HCT116 (cell line): ENCODE measurements at regions of chr19 and their contacts with region 1.

Region 1: DNA sequence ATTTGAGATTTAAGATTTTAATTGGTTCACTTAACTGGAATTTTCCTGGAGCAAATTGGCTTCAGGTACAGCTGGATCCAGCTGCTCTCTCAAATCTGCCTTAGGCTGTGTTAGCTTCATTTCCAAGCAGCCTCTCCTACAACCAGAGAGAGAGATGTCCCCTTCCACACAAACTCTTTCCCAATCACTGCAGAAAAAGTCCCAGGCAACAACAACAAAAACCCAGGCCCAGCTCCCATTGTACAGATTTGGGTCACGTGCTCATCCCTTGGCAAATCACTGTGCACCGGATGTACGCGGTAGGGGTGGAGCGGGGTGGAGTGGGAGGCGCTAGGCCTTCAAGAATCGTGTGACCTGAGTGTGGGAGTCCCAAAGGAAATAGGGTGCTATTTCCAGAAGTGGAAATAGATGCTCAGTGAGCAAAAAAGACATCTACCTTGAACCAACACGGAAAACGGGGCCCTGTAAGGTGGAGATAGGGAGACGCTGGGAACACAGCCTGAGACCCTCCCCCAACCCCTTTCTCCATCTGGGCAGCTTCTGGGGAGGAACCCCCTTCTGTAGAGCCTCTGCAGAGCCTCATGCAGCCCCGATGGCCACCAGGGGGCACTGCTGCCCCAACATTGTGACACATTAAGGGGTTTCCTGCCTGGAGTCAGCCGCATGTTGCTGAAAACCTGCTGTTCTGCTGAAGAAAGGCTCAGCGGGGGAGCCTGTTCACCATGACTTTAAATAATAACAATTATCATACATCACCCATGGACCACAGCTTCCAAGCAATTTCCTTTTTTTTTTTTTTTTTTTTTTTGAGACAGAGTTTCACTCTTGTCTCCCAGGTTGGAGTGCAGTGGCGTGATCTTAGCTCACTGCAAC is 25.4 kb downstream of the HPN start:
- DNase-seq: peak; percentile 89
- ATAC-seq: peak; percentile 97
- H3K4me3 ChIP-seq: peak overlapping the region in 1 of 2 experiments; percentile 13; a peak in 2 of 4 replicates
- H3K27ac ChIP-seq: peak overlapping the region; percentile 30
- H3K4me1 ChIP-seq: peaks cover 10 to 28% of the 10 kb centered on the region in 2 experiments; a peak in 3 of 4 replicates
- H3K27me3 ChIP-seq: no peaks in the 10 kb centered on the region
- CTCF ChIP-seq: peak; percentile 91 to 96 (median 91)
- POLR2A ChIP-seq: no peak
- RAD21 ChIP-seq: peak; percentile 93

Region 2: DNA sequence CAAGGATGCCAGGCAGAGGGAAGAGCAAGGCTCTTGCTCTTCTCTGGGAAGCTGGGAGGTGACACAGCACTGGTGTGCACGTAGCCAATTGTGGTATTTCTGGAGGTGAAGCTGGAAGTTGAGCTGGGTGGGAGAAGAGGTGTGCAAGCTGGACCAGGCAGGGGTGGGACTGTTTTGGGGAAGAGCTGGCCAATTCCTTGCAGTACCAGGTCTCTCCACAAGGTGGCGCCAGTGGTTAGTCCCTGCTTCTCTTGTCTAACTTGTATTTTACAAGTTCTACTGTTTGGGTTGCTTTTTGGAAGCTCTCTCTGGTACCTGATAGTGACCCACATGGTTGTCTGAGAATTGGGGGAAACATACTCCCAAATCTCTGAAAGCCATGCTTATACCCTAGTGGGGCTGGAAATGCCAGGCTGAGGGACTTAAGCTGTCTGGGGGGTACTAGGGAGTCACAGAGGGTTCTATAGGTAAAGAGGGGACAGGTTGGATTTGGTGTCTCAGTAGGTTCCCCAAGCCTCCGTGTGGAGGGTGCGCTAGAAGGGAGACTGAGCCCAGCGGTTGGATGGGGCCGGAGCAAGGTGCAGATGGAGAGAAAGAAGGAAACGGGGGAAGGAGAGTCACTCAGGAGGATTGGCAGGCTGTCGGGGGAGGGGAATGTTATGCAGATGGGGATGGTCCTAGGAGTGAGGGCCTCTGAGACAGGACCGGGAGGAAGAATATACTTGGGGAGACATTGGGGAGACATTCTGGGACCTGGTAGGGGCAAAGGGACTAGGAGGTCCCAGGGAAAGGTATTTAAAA is 22.4 kb before region 1 on chr19:
- CTCF ChIA-PET with region 1: interaction called, 17 read pairs
- POLR2A ChIA-PET with region 1: interaction called, 4 read pairs
- RAD21 ChIA-PET with region 1: no interaction called
- intact Hi-C with region 1: no loop called
- DNase-seq: no peak
- ATAC-seq: peak; percentile 47
- H3K4me3 ChIP-seq: no peak overlapping the region
- H3K27ac ChIP-seq: no peak overlapping the region
- H3K4me1 ChIP-seq: no peaks in the 10 kb centered on the region
- H3K27me3 ChIP-seq: no peaks in the 10 kb centered on the region
- CTCF ChIP-seq: peak; percentile 65 to 98 (median 94)
- POLR2A ChIP-seq: no peak
- RAD21 ChIP-seq: peak; percentile 71

Region 3: DNA sequence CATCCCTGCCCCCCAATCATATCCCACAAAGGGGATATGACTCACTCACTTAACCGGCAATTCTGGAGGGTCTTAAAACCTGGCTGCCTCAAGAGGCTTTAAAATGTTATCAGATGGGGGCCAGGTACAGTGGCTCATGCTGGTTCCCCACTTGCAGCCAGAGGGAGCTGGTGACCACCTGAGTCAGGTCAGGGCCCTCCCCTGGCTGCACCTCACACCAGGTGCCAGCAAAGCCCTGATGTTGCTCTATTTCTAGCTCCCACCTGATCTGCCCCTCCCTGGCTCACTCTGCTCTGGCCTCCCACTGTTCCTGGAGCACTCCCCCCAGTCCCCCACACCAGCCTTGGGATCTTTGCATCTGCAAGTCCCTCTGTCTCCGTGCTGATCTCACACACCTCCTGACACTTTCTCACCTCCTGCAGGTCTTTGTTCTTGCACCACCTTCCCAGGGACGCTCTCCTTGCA is 11.2 kb before region 1 on chr19:
- CTCF ChIA-PET with region 1: interaction called, 22 read pairs
- POLR2A ChIA-PET with region 1: interaction called, 5 read pairs
- RAD21 ChIA-PET with region 1: no interaction called
- intact Hi-C with region 1: no loop called
- DNase-seq: no peak
- ATAC-seq: peak; percentile 99
- H3K4me3 ChIP-seq: no peak overlapping the region
- H3K27ac ChIP-seq: no peak overlapping the region
- H3K4me1 ChIP-seq: peaks cover 0 to 8% of the 10 kb centered on the region in 2 experiments; a peak in 2 of 4 replicates
- H3K27me3 ChIP-seq: no peaks in the 10 kb centered on the region
- CTCF ChIP-seq: peak; percentile 69 to 88 (median 71)
- POLR2A ChIP-seq: no peak
- RAD21 ChIP-seq: peak; percentile 70

Region 4: DNA sequence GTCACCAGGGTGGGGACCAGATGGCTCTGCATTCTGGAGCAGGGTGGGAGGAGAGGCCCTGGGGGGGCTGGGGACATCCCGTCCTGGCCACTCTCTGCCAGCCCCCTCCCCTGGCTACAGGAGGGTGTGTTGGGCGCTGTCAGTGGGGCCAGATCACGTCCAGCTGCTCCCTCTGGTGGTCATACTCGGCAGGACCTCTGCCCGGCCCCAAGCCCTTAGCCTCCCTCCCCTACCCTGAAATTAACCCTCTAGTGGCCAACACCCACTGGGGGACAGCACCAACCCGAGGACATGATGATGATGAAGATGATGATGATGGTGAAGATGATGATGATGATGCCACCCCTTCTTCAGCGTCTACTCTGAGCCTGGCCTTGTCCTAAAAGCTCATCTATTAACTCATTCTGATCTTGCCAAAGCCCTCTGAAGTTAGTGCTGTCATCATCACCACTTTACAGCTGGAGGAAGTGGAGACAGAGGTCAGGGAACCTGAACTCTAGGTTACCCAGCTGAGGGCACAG is 68.5 kb after region 1 on chr19:
- CTCF ChIA-PET with region 1: interaction called, 28 read pairs
- POLR2A ChIA-PET with region 1: no interaction called
- RAD21 ChIA-PET with region 1: interaction called in 1 of 2 experiments, 3 read pairs
- intact Hi-C with region 1: loop called (anchors 1 kb)
- DNase-seq: peak; percentile 51
- ATAC-seq: peak; percentile 97
- H3K4me3 ChIP-seq: no peak overlapping the region
- H3K27ac ChIP-seq: no peak overlapping the region
- H3K4me1 ChIP-seq: no peaks in the 10 kb centered on the region; a peak in 1 of 4 replicates
- H3K27me3 ChIP-seq: no peaks in the 10 kb centered on the region
- CTCF ChIP-seq: peak; percentile 83 to 88 (median 87)
- POLR2A ChIP-seq: no peak
- RAD21 ChIP-seq: peak; percentile 84

Region 5: GRCh38 chr19:35140962-35141637 is 74.2 kb after region 1 on chr19:
- CTCF ChIA-PET with region 1: interaction called, 46 read pairs
- POLR2A ChIA-PET with region 1: interaction called, 12 read pairs
- RAD21 ChIA-PET with region 1: interaction called, 24 to 25 read pairs
- intact Hi-C with region 1: no loop called
- DNase-seq: peak; percentile 83
- ATAC-seq: peak; percentile 85
- H3K4me3 ChIP-seq: peak overlapping the region; percentile 49 to 66
- H3K27ac ChIP-seq: peak overlapping the region; percentile 32; the same call in 1 of the 2 replicates
- H3K4me1 ChIP-seq: peaks cover 22 to 35% of the 10 kb centered on the region in 2 experiments
- H3K27me3 ChIP-seq: no peaks in the 10 kb centered on the region
- CTCF ChIP-seq: peak; percentile 44 to 47 (median 46); a peak in 4 of 6 replicates
- POLR2A ChIP-seq: no peak
- RAD21 ChIP-seq: peak; percentile 72

Region 6: GRCh38 chr19:35247526-35248306 is 180.8 kb after region 1 on chr19:
- CTCF ChIA-PET with region 1: no interaction called
- POLR2A ChIA-PET with region 1: no interaction called
- RAD21 ChIA-PET with region 1: no interaction called
- intact Hi-C with region 1: loop called (anchors 5 kb)
- DNase-seq: peak; percentile 95
- ATAC-seq: peak; percentile 75
- H3K4me3 ChIP-seq: peak overlapping the region; percentile 98 to 99
- H3K27ac ChIP-seq: peak overlapping the region; percentile 98
- H3K4me1 ChIP-seq: peaks cover 10 to 26% of the 10 kb centered on the region in 2 experiments
- H3K27me3 ChIP-seq: no peaks in the 10 kb centered on the region
- CTCF ChIP-seq: peak in 2 of 3 experiments; percentile 51 to 61; a peak in 5 of 6 replicates
- POLR2A ChIP-seq: peak; percentile 40
- RAD21 ChIP-seq: peak; percentile 74